ENCODE measurements at regions of chr14 and their contacts with region 1.

Region 1: GRCh38 chr14:68911594-68912227 is 67.4 kb downstream of the ACTN1 start:
- DNase-seq: peak; percentile 81
- H3K4me3 ChIP-seq: no peak overlapping the region
- H3K27ac ChIP-seq: no peak overlapping the region
- H3K4me1 ChIP-seq: no peaks in the 10 kb centered on the region
- H3K27me3 ChIP-seq: no peaks in the 10 kb centered on the region
- CTCF ChIP-seq: peak; percentile 99

Region 2: GRCh38 chr14:68523989-68524725 is 387.6 kb before region 1 on chr14:
- intact Hi-C with region 1: no loop called
- DNase-seq: no peak
- H3K4me3 ChIP-seq: no peak overlapping the region
- H3K27ac ChIP-seq: no peak overlapping the region
- H3K4me1 ChIP-seq: no peaks in the 10 kb centered on the region
- H3K27me3 ChIP-seq: no peaks in the 10 kb centered on the region
- CTCF ChIP-seq: no peak

Region 3: DNA sequence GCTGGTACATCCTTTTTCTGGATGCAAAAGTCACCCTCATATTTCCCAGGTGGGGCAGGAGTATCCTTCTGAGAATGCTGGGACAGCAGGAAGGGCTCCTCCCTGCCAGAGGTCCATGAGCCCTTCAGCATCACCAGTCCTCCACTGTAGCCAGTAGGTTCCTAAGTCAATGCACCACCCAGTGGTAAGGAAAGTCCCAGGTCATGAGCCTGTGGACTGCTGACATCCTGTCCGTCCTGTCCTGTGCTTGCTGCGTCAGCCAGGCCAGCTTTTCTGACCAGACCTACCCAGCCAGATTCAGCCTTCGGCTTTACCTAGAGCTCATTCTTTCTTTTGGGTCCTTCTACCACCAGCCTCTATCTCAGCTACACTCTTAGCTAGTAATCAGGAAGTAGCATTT is 90.4 kb after region 1 on chr14:
- intact Hi-C with region 1: loop called (anchors 5 kb)
- DNase-seq: peak; percentile 39
- H3K4me3 ChIP-seq: no peak overlapping the region
- H3K27ac ChIP-seq: no peak overlapping the region
- H3K4me1 ChIP-seq: no peaks in the 10 kb centered on the region
- H3K27me3 ChIP-seq: no peaks in the 10 kb centered on the region
- CTCF ChIP-seq: no peak

Region 4: DNA sequence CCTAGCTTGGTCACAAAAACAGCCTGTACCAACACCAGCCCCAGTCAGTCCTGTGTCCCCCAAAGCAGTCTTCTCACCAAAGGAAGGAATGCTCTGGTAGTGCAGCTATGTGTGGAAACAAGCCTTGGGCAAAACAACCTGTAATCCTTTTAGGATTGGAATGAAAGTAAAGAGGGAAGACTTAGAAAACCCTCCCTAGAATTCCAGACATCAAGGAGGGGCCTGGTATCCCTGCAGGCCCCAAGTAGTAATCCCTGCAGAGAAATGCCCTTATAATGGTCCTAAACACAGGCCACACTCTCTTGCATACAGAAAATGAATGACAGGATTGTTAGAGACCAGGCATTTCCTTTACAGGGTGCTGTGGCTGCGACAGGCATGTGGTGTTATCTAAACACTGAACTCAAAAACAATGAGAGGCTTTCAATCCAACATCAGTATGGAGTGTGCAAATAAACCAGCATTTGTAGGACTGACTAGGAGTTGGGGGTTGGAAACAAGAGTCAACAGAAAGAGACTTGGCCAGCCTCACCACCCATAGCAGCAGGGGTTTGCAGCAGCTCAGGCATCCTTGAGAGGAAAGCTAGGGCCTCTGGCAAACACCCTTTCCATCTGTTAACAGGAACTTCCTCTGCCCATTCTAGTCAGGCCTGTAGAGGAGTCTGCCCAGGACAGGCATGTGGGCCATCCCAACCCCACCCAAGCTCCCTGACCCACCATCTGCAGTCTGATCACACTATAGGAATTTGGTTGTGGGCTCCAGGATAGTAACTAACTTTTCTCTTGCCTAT is 182.1 kb after region 1 on chr14:
- intact Hi-C with region 1: loop called (anchors 2 kb)
- DNase-seq: no peak
- H3K4me3 ChIP-seq: no peak overlapping the region
- H3K27ac ChIP-seq: no peak overlapping the region
- H3K4me1 ChIP-seq: no peaks in the 10 kb centered on the region
- H3K27me3 ChIP-seq: no peaks in the 10 kb centered on the region
- CTCF ChIP-seq: no peak